Activated CD4-positive, alpha-beta T cell treated with anti-CD3 and anti-CD28 coated beads for 36 hours (primary cell): ENCODE measurements at regions of chr17 and their contacts with region 1.

Region 1: GRCh38 chr17:50719144-50719923 is at the start of gene LUC7L3:
- DNase-seq: peak; percentile 97
- ATAC-seq: peak; percentile 89
- H3K4me3 Mint-ChIP-seq: peak within 1 kb of the TSS; percentile 87
- H3K27ac Mint-ChIP-seq: peak within 1 kb of the TSS; percentile 99
- H3K4me1 Mint-ChIP-seq: peaks cover 22% of the 10 kb centered on the region
- H3K27me3 Mint-ChIP-seq: no peaks in the 10 kb centered on the region
- total RNA-seq, gene LUC7L3: 112 to 120 TPM

Region 2: DNA sequence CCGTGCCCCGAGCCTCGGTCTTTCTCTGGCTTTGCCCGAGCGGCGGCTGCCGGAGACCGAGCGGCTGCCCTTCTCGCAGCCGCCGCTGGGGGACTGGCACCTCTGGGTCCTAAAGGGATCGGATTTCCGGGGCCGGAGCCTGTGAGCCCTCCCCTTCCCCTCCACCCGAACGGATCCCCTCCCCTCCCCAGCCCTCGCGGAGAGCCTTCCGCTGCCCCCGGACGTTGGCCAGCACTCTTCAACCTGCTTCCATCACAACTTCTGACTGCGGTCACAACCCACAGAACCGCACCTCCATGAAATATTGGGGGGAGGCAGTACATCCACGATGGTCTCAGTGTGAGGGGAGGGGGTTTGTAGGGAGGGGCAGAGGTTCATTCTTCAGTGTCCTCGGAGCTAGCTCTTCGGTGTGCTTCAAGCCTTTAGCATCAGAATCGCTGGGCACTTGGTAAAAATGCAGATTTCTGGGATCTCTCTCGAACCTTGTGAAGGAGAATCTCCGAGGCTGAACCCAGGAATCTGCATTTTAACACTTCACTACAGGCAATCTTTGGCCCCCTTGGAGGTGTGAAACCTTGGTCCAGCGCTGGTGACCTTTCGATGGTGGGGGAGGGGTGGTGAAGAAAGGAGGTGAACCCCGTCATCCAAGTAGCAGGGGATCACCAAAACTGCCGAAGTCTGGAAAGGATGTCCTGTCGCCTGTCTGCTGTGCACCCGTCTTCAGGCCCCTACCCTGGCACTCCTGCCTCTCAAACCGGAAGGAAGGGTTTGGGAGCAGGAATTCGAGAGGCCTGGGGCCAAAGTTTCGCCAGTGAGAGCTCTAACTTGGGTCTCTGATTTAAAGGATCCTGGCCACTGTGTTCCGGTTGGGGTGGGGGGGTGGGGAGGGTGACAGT is 568.0 kb before region 1 on chr17:
- CTCF ChIA-PET with region 1: no interaction called
- POLR2A ChIA-PET with region 1: no interaction called
- intact Hi-C with region 1: loop called in 1 of 2 experiments (anchors 2 kb)
- DNase-seq: peak; percentile 95
- ATAC-seq: peak; percentile 66
- H3K4me3 Mint-ChIP-seq: peak overlapping the region; percentile 90
- H3K27ac Mint-ChIP-seq: peak overlapping the region; percentile 96
- H3K4me1 Mint-ChIP-seq: peaks cover 40% of the 10 kb centered on the region
- H3K27me3 Mint-ChIP-seq: no peaks in the 10 kb centered on the region

Region 3: DNA sequence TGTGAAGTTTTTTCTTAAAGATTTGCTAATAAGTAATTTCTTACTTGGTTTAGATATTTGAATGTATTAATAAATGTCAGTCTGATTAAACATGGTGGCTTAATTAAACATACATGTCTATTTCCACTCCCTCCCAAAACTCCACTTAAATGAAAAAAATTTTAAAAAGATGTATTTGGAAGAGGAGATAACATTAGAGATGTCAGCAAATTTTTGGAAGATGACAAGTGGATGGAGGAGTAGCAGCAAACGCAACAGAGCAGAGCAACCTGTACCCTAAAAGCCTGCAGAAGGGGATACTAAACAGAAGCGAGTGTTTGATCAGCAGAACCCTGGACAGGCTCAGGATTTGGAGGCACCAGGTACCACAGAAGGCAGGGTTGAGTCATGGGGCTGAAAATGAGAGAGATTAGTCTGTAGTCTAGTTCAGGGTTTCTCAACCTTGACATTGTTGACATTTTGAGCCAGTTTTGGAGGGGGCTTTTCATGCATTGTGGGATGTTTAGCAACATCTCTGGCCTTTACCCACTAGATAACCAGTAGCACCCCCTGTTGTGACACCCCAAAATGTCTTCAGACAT is 17.9 kb after region 1 on chr17:
- CTCF ChIA-PET with region 1: no interaction called
- POLR2A ChIA-PET with region 1: no interaction called
- intact Hi-C with region 1: loop called in 1 of 2 experiments (anchors 2 kb)
- DNase-seq: peak; percentile 44
- ATAC-seq: peak; percentile 88
- H3K4me3 Mint-ChIP-seq: no peak overlapping the region
- H3K27ac Mint-ChIP-seq: peak overlapping the region; percentile 9
- H3K4me1 Mint-ChIP-seq: peaks cover 56% of the 10 kb centered on the region
- H3K27me3 Mint-ChIP-seq: no peaks in the 10 kb centered on the region